Activated CD4-positive, alpha-beta memory T cell treated with anti-CD3 and anti-CD28 coated beads for 36 hours (primary cell): ENCODE measurements at regions of chr3 and their contacts with region 1.

Region 1: DNA sequence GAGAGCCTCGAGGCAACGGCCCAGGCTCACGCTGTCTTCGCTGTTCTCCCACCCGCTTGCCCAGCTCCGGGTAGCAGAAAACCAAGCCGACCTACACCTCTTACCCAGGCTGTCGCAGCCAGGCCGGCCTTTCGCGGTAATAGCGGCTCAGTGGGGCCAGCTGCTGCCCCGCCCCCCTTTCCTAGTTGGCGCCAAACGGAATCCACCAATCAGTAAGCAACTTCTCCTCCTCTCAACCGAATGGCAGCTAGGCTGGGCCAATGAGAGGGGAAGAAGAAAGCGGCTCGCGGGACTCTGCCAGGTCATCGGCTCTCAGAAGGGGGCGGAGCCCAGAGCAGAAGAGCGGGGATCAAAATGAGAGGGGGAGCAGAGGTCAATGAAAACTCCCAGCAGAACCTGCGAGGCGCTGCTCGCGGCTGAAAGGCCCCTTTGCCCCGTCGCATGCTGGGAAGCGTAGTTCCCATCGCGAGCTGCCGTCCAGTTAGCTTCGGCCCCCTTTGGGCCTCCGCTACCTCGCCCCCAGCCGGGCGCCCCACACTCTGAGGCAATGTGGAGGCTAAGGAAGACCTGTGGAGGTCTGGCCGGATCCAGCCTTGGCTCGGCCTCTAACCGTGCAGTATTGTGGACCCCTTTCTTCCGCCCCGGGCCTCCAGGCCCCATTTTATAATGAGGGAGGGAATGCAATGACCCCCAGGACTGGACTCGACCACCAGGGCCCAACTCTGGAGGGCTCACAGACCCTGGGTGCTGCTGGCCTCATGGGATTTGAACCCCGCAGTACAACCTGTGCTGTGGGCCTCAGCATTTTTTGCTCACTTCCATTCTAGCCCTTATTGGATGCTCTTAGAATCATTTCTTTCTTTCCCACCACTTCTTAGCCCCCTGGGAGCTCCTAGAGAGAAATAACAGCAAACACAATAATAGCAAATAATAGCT is at the start of gene CDC25A:
- DNase-seq: peak; percentile 98
- H3K4me3 Mint-ChIP-seq: peak within 1 kb of the TSS; percentile 94
- H3K27ac Mint-ChIP-seq: peak within 1 kb of the TSS; percentile 66
- H3K4me1 Mint-ChIP-seq: peaks cover 14% of the 10 kb centered on the region
- H3K27me3 Mint-ChIP-seq: peaks cover 7% of the 10 kb centered on the region
- total RNA-seq, gene CDC25A: 33.7 to 36.8 TPM

Region 2: DNA sequence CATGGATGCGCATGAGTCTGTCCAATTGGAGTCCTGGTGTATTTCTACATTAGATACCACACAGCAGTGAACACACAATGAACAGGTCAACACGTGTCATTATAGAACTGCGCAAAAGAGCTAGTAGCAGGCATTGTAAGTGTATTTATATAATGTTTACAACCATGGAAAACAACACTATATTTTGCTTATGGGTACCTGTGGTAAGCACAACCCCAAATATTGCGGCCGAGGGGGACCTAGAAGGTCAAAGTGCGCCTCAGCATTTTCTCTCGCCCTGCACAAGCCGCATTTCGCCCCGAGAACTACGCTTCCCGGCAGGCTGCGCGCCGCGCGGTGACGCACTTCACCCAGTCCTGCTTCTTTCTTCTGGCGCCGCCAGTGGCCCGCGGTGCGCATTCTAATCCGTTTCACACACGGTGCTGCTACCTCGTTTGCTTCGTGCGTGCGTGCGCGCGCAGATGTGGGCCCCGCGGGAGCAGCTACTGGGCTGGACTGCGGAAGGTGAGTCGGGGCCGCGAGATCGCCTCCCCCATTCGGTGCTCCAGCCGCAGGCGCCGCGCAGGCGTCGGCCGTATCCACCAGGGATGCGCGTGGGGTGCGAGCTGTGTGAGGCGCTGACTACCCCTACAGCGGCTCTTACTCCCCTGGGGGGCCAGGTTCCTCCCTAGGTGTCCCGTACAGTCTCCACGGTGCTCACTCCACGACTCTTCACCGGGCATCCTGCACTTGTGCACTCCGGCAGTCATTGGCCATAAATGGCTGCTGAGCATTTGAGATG is 52.4 kb after region 1 on chr3 and contains the start of gene ZNF589:
- CTCF ChIA-PET with region 1: no interaction called
- POLR2A ChIA-PET with region 1: no interaction called
- intact Hi-C with region 1: loop called (anchors 1 kb)
- DNase-seq: peak; percentile 96
- H3K4me3 Mint-ChIP-seq: peak within 1 kb of the TSS; percentile 88
- H3K27ac Mint-ChIP-seq: peak within 1 kb of the TSS; percentile 92
- H3K4me1 Mint-ChIP-seq: peaks cover 21% of the 10 kb centered on the region
- H3K27me3 Mint-ChIP-seq: no peaks in the 10 kb centered on the region
- total RNA-seq, gene ZNF589: 28.0 to 31.4 TPM

Region 3: DNA sequence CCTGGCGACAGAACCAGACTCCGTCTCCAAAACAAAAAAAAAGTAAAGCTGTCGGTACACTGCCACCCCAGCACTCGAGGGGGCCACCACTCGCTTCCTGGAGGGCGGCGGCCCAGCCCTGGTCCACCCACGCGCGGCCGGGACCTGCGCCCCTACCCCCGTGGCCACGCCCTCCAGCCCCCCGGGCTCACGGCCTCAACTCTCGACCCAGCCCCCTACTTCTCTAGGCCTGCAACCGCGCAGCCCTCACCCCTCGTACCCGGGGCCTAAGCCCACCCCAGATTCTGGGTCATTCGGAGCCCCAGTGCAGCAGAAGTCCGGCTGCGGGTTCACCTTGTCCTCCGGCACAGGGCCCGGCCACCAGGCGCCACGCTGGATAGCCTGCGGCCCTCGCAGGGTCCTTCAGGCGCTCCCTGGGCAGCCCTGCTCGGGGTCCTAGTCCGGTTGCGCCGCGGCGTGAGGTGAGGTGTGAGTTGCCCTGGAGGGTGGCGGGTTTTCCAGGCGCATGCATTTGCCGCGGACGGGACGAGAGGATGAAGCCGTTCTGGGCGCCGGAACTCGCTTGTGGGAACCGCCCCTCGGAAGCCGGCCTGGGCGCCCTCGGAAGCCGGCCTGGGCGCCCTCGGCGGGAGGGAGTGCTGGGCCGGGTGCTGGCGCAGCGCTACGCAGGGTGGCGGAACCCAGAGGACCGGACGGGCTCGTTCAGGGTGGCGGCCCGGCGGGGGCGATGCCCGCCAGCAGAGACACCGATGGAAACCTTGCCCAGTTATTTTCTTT is 112.7 kb after region 1 on chr3:
- CTCF ChIA-PET with region 1: interaction called, 5 read pairs
- POLR2A ChIA-PET with region 1: interaction called, 4 read pairs
- intact Hi-C with region 1: loop called (anchors 1 kb)
- DNase-seq: peak; percentile 95
- H3K4me3 Mint-ChIP-seq: peak within 1 kb of the TSS; percentile 96
- H3K27ac Mint-ChIP-seq: peak within 1 kb of the TSS; percentile 98
- H3K4me1 Mint-ChIP-seq: peaks cover 34% of the 10 kb centered on the region
- H3K27me3 Mint-ChIP-seq: no peaks in the 10 kb centered on the region